ENCODE measurements at regions of chr2 and their contacts with region 1.

Region 1: GRCh38 chr2:64330281-64331113 is 123.5 kb upstream of the LGALSL start:
- DNase-seq: peak; percentile 41 to 93 (median 72)
- ATAC-seq: peak in 2 of 4 experiments; percentile 25 to 29
- H3K4me3 ChIP-seq: no peak overlapping the region
- H3K4me3 Mint-ChIP-seq: peak overlapping the region in 1 of 3 donors; percentile 29
- H3K27ac ChIP-seq: no peak overlapping the region
- H3K27ac Mint-ChIP-seq: peak overlapping the region; percentile 72 to 81
- H3K4me1 ChIP-seq: peaks cover 24 to 38% of the 10 kb centered on the region in 2 experiments
- H3K4me1 Mint-ChIP-seq: peaks cover 35 to 43% (median 41%) of the 10 kb centered on the region in 3 donors
- H3K27me3 ChIP-seq: no peaks in the 10 kb centered on the region
- H3K27me3 Mint-ChIP-seq: no peaks in the 10 kb centered on the region

Region 2: DNA sequence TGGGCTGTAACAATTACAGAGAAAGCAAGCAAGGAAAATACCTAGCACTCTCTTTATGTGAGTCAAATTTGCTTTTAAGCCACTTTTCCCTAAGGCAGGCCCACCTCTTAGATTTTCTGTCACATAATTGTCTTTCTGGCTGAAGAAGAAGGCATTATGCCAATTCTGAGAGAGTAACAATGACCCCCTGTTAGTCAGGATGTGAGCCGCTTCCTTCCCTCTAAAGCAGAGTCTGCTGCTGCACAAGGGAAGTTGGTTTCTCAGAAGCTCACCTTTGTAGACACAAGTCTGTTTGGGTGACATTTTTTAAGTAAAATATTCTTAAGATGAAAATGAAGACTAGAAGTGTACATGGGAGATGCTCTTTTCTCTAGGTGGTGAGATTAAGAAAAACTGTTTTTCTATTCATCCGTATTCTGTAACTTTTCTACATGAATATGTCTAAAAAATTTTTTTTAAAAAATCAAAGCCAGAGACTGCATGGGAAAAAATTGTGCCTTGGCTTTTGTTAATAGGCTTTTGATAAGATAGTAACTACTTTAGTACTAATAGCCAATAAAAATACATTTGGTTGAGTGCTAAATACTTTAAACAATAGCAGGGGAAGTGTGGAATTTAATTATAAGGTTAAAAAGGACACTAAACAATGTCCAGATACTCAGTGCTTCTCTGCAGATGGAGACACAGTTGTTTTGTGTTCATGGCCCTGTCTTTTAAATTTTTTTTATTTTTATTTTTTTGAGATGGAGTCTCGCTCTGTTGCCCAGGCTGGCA is 277.8 kb before region 1 on chr2:
- CTCF ChIA-PET with region 1: interaction called, 39 to 185 read pairs
- POLR2A ChIA-PET with region 1: no interaction called
- DNase-seq: peak in 14 of 35 experiments; percentile 8 to 43 (median 22)
- ATAC-seq: peak; percentile 55 to 78 (median 76)
- H3K4me3 ChIP-seq: no peak overlapping the region
- H3K4me3 Mint-ChIP-seq: peak overlapping the region in 1 of 3 donors; percentile 29
- H3K27ac ChIP-seq: no peak overlapping the region
- H3K27ac Mint-ChIP-seq: peak overlapping the region; percentile 75 to 80
- H3K4me1 ChIP-seq: peaks cover 16 to 33% of the 10 kb centered on the region in 2 experiments
- H3K4me1 Mint-ChIP-seq: peaks cover 41 to 56% (median 43%) of the 10 kb centered on the region in 3 donors
- H3K27me3 ChIP-seq: no peaks in the 10 kb centered on the region
- H3K27me3 Mint-ChIP-seq: no peaks in the 10 kb centered on the region

Region 3: GRCh38 chr2:64488050-64488974 is 157.8 kb after region 1 on chr2:
- CTCF ChIA-PET with region 1: interaction called, 46 to 62 read pairs
- POLR2A ChIA-PET with region 1: interaction called in 1 of 2 experiments, 3 read pairs
- DNase-seq: peak; percentile 36 to 86 (median 70)
- ATAC-seq: peak; percentile 76 to 87 (median 78)
- H3K4me3 ChIP-seq: no peak overlapping the region
- H3K4me3 Mint-ChIP-seq: no peak overlapping the region
- H3K27ac ChIP-seq: no peak overlapping the region
- H3K27ac Mint-ChIP-seq: no peak overlapping the region
- H3K4me1 ChIP-seq: peaks cover 4 to 15% of the 10 kb centered on the region in 2 experiments
- H3K4me1 Mint-ChIP-seq: peaks cover 9 to 15% (median 13%) of the 10 kb centered on the region in 3 donors
- H3K27me3 ChIP-seq: peaks cover 0 to 10% of the 10 kb centered on the region in 2 experiments
- H3K27me3 Mint-ChIP-seq: peaks cover 1 to 5% of the 10 kb centered on the region in 2 donors

Region 4: DNA sequence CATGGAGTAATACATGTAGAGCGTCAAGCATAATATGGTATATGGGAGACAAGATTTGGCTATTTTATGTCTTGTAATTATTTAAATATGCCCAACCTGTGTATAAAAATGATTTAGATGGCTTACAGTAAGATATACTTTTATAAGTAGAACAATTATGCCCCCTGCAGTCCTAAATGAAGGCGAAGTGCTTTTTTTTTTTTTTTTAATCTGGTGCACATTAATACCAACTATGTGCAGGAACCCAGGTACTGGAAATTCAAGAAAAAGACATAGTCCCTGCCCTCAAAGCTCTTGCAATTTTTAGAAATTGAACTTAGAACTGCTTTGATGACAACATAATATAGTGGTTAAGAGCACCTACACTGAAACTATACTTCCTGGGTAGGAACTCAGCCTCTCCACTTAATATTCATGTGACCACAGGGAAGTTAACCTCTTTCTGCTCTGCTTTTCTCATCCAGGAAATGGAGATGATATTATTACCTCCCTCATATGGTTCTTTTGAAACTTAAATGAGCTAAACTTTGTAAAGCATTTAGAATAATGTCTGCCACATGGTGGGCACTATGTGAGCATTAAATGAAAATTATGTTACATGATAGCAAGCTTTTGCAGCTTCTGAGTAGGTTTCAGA is 231.8 kb after region 1 on chr2:
- CTCF ChIA-PET with region 1: interaction called, 14 to 32 read pairs
- POLR2A ChIA-PET with region 1: interaction called in 1 of 2 experiments, 3 read pairs
- DNase-seq: peak in 3 of 35 experiments; percentile 3 to 59 (median 7)
- ATAC-seq: peak in 2 of 4 experiments; percentile 47 to 79
- H3K4me3 ChIP-seq: no peak overlapping the region
- H3K4me3 Mint-ChIP-seq: no peak overlapping the region
- H3K27ac ChIP-seq: no peak overlapping the region
- H3K27ac Mint-ChIP-seq: peak overlapping the region in 1 of 2 donors; percentile 48
- H3K4me1 ChIP-seq: peaks cover 3 to 12% of the 10 kb centered on the region in 2 experiments
- H3K4me1 Mint-ChIP-seq: peaks cover 27 to 32% (median 30%) of the 10 kb centered on the region in 3 donors
- H3K27me3 ChIP-seq: no peaks in the 10 kb centered on the region
- H3K27me3 Mint-ChIP-seq: no peaks in the 10 kb centered on the region

Region 5: GRCh38 chr2:64653349-64654062 is 323.0 kb after region 1 on chr2 and contains the start of gene SERTAD2:
- CTCF ChIA-PET with region 1: interaction called in 1 of 2 experiments, 6 read pairs
- POLR2A ChIA-PET with region 1: interaction called in 1 of 2 experiments, 11 read pairs
- DNase-seq: peak; percentile 71 to 93 (median 85)
- ATAC-seq: peak; percentile 89 to 91 (median 90)
- H3K4me3 ChIP-seq: peak within 1 kb of the TSS; percentile 94 to 96
- H3K4me3 Mint-ChIP-seq: peak within 1 kb of the TSS; percentile 88 to 91 (median 89)
- H3K27ac ChIP-seq: peak within 1 kb of the TSS; percentile 86
- H3K27ac Mint-ChIP-seq: peak within 1 kb of the TSS; percentile 91 to 92
- H3K4me1 ChIP-seq: peaks cover 25 to 56% of the 10 kb centered on the region in 2 experiments
- H3K4me1 Mint-ChIP-seq: peaks cover 75 to 81% (median 76%) of the 10 kb centered on the region in 3 donors
- H3K27me3 ChIP-seq: no peaks in the 10 kb centered on the region
- H3K27me3 Mint-ChIP-seq: no peaks in the 10 kb centered on the region
- total RNA-seq, gene SERTAD2: 22.8 to 39.7 (median 27.4) TPM

Measured in T-cell (primary cell).